ENCODE measurements at regions of chr20 and their contacts with region 1.

Region 1: GRCh38 chr20:44785769-44786168 is 24.6 kb downstream of the RIMS4 start:
- DNase-seq: peak; percentile 64
- ATAC-seq: peak; percentile 90
- H3K4me3 Mint-ChIP-seq: no peak overlapping the region
- H3K27ac Mint-ChIP-seq: peak overlapping the region; percentile 66; the same call in 1 of the 2 replicates
- H3K4me1 Mint-ChIP-seq: peaks cover 30% of the 10 kb centered on the region
- H3K27me3 Mint-ChIP-seq: no peaks in the 10 kb centered on the region
- CTCF ChIP-seq: no peak

Region 2: DNA sequence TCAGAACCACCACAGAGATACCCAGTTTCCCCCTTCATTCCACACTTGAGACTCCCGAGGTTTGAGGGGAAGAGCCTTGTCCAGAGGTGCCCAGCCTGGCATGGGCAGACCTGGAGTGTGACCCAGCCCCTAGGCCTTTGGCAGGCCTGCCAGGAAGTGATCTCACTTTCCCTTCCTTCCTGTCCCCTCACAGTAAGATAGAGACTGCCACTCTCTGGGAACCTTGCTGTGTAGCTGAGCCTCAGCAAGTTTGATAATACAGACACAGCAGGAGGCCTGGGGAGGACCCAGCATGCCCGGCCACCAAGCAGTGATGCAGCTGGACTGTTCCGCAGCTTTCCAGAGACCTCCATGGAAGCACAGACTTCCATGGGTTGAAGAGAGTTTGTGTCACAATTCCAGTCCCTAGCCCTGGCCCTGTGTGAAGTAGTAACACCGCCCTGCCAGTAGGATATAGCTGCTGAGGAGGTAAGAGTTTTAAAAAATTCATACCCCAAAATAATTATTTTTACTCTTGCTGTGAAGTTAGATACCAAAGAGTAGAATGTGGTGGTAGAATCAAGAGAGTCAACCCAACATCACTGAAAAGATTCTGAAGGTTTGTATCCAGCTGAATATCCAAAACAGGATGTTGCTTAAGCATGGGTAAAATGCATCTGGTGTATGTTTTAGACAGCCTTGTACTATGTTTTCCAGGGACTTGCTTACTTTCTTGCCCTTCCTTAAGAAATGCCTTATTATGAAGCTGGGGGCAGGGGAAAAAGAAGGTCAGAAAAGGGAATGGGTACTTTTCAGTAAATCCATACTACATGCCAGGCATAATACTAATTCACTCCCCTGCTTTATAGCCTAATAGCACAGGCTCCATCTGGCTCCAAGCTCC is 187.1 kb before region 1 on chr20:
- CTCF ChIA-PET with region 1: no interaction called
- POLR2A ChIA-PET with region 1: no interaction called
- DNase-seq: no peak
- ATAC-seq: peak; percentile 58
- H3K4me3 Mint-ChIP-seq: no peak overlapping the region
- H3K27ac Mint-ChIP-seq: 0 out of 2 replicates have a peak overlapping the region, but pooled peaks have one; percentile 12
- H3K4me1 Mint-ChIP-seq: peaks cover 34% of the 10 kb centered on the region
- H3K27me3 Mint-ChIP-seq: no peaks in the 10 kb centered on the region
- CTCF ChIP-seq: no peak

Region 3: GRCh38 chr20:44800398-44801046 is 14.8 kb after region 1 on chr20:
- CTCF ChIA-PET with region 1: interaction called, 65 read pairs
- POLR2A ChIA-PET with region 1: no interaction called
- DNase-seq: peak; percentile 63
- ATAC-seq: peak; percentile 74
- H3K4me3 Mint-ChIP-seq: no peak overlapping the region
- H3K27ac Mint-ChIP-seq: no peak overlapping the region
- H3K4me1 Mint-ChIP-seq: peaks cover 17% of the 10 kb centered on the region
- H3K27me3 Mint-ChIP-seq: no peaks in the 10 kb centered on the region
- CTCF ChIP-seq: no peak; the same call in 1 of the 2 replicates

Region 4: GRCh38 chr20:44805979-44806620 is 20.3 kb after region 1 on chr20:
- CTCF ChIA-PET with region 1: interaction called, 65 read pairs
- POLR2A ChIA-PET with region 1: no interaction called
- DNase-seq: peak; percentile 81
- ATAC-seq: peak; percentile 76
- H3K4me3 Mint-ChIP-seq: no peak overlapping the region
- H3K27ac Mint-ChIP-seq: no peak overlapping the region
- H3K4me1 Mint-ChIP-seq: peaks cover 22% of the 10 kb centered on the region
- H3K27me3 Mint-ChIP-seq: peaks cover 39% of the 10 kb centered on the region
- CTCF ChIP-seq: no peak

Region 5: GRCh38 chr20:44851545-44851944 is 65.8 kb after region 1 on chr20:
- CTCF ChIA-PET with region 1: interaction called, 10 read pairs
- POLR2A ChIA-PET with region 1: interaction called, 3 read pairs
- DNase-seq: no peak
- ATAC-seq: peak; percentile 83
- H3K4me3 Mint-ChIP-seq: no peak overlapping the region
- H3K27ac Mint-ChIP-seq: peak overlapping the region; percentile 18; the same call in 1 of the 2 replicates
- H3K4me1 Mint-ChIP-seq: peaks cover 19% of the 10 kb centered on the region
- H3K27me3 Mint-ChIP-seq: peaks cover under 1% of the 10 kb centered on the region; the same call in 1 of the 2 replicates
- CTCF ChIP-seq: no peak

Region 6: DNA sequence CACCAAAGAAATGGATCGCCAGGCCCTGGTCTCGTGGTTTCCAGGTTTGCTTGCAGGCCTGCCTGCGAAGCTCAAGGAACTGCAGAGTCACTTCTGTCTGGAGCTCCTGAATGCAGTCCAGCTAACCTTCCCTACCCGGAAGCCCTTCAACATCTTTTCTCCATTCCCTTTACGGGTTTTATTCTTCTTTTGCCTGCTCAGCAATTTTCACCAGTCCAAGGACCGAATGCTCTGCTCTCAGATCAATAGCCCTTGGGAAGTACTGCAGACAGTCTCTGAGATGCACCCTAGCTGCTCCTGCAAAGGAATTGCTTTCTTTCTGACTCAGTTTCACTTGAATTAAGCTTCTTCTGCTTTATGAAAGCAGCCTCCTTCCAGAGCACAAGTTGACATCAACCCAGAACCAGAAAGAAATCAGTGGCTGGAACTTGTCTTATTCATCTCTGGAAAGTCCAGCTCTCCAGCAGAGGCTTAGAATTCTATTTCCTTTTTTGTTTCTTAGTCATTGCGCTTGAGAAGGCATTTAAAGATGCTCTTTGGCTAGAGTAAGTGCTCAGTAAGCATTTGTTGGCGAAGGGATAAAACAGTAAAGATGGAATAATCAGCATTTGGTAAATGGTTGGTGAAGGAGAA is 81.0 kb after region 1 on chr20:
- CTCF ChIA-PET with region 1: interaction called, 20 read pairs
- POLR2A ChIA-PET with region 1: no interaction called
- DNase-seq: no peak
- ATAC-seq: no peak
- H3K4me3 Mint-ChIP-seq: no peak overlapping the region
- H3K27ac Mint-ChIP-seq: no peak overlapping the region
- H3K4me1 Mint-ChIP-seq: no peaks in the 10 kb centered on the region
- H3K27me3 Mint-ChIP-seq: no peaks in the 10 kb centered on the region; the same call in 1 of the 2 replicates
- CTCF ChIP-seq: no peak

Region 7: GRCh38 chr20:44885392-44886265 is 99.9 kb after region 1 on chr20 and contains the start of gene YWHAB:
- CTCF ChIA-PET with region 1: interaction called, 21 read pairs
- POLR2A ChIA-PET with region 1: no interaction called
- DNase-seq: peak; percentile 99
- ATAC-seq: peak; percentile 98
- H3K4me3 Mint-ChIP-seq: peak within 1 kb of the TSS; percentile 97
- H3K27ac Mint-ChIP-seq: peak within 1 kb of the TSS; percentile 91
- H3K4me1 Mint-ChIP-seq: peaks cover 46% of the 10 kb centered on the region
- H3K27me3 Mint-ChIP-seq: peaks cover 3% of the 10 kb centered on the region; the same call in 1 of the 2 replicates
- CTCF ChIP-seq: no peak
- total RNA-seq, gene YWHAB: 177 to 216 TPM (median 183 TPM) in 3 replicates

Measured in WTC11 (cell line).